GM13976 (cell line): ENCODE measurements at regions of chr10 and their contacts with region 1.

Region 1: GRCh38 chr10:120942806-120943413 is 91.7 kb downstream of the WDR11 start:
- DNase-seq: peak; percentile 86
- CTCF ChIP-seq: peak; percentile 91

Region 2: GRCh38 chr10:121734589-121735045 is 791.7 kb after region 1 on chr10:
- in situ Hi-C with region 1: loop called (anchors 10 kb)
- DNase-seq: peak; percentile 67
- CTCF ChIP-seq: peak; percentile 49